CD8-positive, alpha-beta memory T cell (primary cell): ENCODE measurements at regions of chr12 and their contacts with region 1.

Region 1: GRCh38 chr12:94192506-94192905 is 44.1 kb downstream of the PLXNC1 start:
- DNase-seq: no peak
- H3K4me3 ChIP-seq: no peak overlapping the region
- H3K4me3 Mint-ChIP-seq: no peak overlapping the region
- H3K27ac ChIP-seq: no peak overlapping the region
- H3K27ac Mint-ChIP-seq: peak overlapping the region in 1 of 8 donors; percentile 12
- H3K4me1 ChIP-seq: no peaks in the 10 kb centered on the region
- H3K4me1 Mint-ChIP-seq: peaks cover 0 to 7% (median 6%) of the 10 kb centered on the region in 3 donors
- H3K27me3 ChIP-seq: no peaks in the 10 kb centered on the region
- H3K27me3 Mint-ChIP-seq: no peaks in the 10 kb centered on the region

Region 2: DNA sequence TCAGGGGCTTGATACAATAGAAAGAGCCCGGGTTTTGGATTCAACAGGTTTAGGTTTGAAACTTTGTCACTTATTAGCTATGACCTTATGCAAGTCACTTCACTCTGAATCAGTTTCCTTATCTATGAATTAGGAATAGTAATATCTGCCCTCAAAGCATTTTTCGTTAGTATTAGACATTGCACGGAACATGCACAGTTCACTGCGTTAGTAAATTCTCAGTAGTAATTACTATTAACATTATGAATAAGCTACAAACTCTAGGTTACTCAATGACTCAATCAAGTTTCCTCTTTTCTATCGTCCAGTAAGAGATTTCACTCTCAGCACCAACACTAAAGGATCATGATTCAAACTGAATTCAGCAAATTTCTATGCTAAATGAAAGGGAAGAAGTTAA is 116.9 kb after region 1 on chr12:
- CTCF ChIA-PET with region 1: no interaction called
- POLR2A ChIA-PET with region 1: interaction called, 15 read pairs
- DNase-seq: no peak
- H3K4me3 ChIP-seq: no peak overlapping the region
- H3K4me3 Mint-ChIP-seq: no peak overlapping the region
- H3K27ac ChIP-seq: no peak overlapping the region
- H3K27ac Mint-ChIP-seq: no peak overlapping the region
- H3K4me1 ChIP-seq: no peaks in the 10 kb centered on the region
- H3K4me1 Mint-ChIP-seq: peaks cover 3 to 16% (median 14%) of the 10 kb centered on the region in 3 donors
- H3K27me3 ChIP-seq: no peaks in the 10 kb centered on the region
- H3K27me3 Mint-ChIP-seq: no peaks in the 10 kb centered on the region